HepG2 (cell line): ENCODE measurements at regions of chr18 and their contacts with region 1.

Region 1: GRCh38 chr18:51278045-51278649 is 80.7 kb upstream of the MEX3C start:
- DNase-seq: peak; percentile 47
- ATAC-seq: peak; percentile 77
- H3K4me3 ChIP-seq: no peak overlapping the region
- H3K27ac ChIP-seq: no peak overlapping the region
- H3K4me1 ChIP-seq: peaks cover 61% of the 10 kb centered on the region
- H3K27me3 ChIP-seq: no peaks in the 10 kb centered on the region
- CTCF ChIP-seq: peak; percentile 76
- EP300 ChIP-seq: no peak
- POLR2A ChIP-seq: no peak
- RAD21 ChIP-seq: peak; percentile 57

Region 2: GRCh38 chr18:51361130-51361860 is 83.1 kb after region 1 on chr18:
- CTCF ChIA-PET with region 1: no interaction called
- POLR2A ChIA-PET with region 1: no interaction called
- in situ Hi-C with region 1: no loop called
- intact Hi-C with region 1: loop called (anchors 2 kb)
- DNase-seq: peak; percentile 60
- ATAC-seq: peak; percentile 85
- H3K4me3 ChIP-seq: peak overlapping the region in 2 of 3 experiments; percentile 9 to 23; a peak in 3 of 6 replicates
- H3K27ac ChIP-seq: peak overlapping the region; percentile 55
- H3K4me1 ChIP-seq: peaks cover 29% of the 10 kb centered on the region
- H3K27me3 ChIP-seq: 0 out of 5 replicates have a peak, but pooled peaks cover 0 to 2% of the 10 kb centered on the region in 2 experiments
- CTCF ChIP-seq: no peak
- EP300 ChIP-seq: peak in 1 of 2 experiments; percentile 63; a peak in 2 of 4 replicates
- POLR2A ChIP-seq: no peak
- RAD21 ChIP-seq: no peak

Region 3: DNA sequence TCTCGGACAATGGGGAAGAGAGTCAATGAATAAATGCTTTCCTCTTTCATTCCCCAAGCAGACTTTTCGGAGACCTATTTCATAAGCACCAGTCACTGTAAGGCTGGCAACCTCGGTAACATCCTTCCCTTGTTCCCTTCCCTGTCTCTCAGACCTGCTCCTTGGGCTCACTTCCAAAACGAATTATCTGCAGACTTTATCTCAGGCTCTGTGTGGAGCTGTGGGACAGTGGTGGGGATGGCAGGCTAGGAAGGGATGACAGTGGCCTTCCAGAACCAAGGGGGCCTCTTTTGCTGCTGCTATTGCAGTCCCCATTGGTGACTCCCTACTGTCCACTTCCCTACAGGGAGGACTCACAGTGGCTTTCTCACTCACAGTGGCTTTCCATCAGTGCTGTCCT is 105.0 kb after region 1 on chr18:
- CTCF ChIA-PET with region 1: interaction called, 6 read pairs
- POLR2A ChIA-PET with region 1: no interaction called
- in situ Hi-C with region 1: loop called (anchors 10 kb)
- intact Hi-C with region 1: loop called (anchors 2 kb)
- DNase-seq: no peak
- ATAC-seq: no peak
- H3K4me3 ChIP-seq: no peak overlapping the region
- H3K27ac ChIP-seq: no peak overlapping the region
- H3K4me1 ChIP-seq: no peaks in the 10 kb centered on the region
- H3K27me3 ChIP-seq: no peaks in the 10 kb centered on the region
- CTCF ChIP-seq: no peak
- EP300 ChIP-seq: no peak
- POLR2A ChIP-seq: no peak
- RAD21 ChIP-seq: no peak